ENCODE measurements at regions of chr11 and their contacts with region 1.

Region 1: GRCh38 chr11:62645956-62646824 is at the start of gene GANAB:
- DNase-seq: peak; percentile 98
- H3K4me3 Mint-ChIP-seq: peak within 1 kb of the TSS; percentile 93
- H3K27ac Mint-ChIP-seq: peak within 1 kb of the TSS; percentile 91
- H3K4me1 Mint-ChIP-seq: no peaks in the 10 kb centered on the region
- H3K27me3 Mint-ChIP-seq: no peaks in the 10 kb centered on the region
- CTCF ChIP-seq: no peak
- total RNA-seq, gene GANAB: 356 and 377 TPM in 2 replicates

Region 2: DNA sequence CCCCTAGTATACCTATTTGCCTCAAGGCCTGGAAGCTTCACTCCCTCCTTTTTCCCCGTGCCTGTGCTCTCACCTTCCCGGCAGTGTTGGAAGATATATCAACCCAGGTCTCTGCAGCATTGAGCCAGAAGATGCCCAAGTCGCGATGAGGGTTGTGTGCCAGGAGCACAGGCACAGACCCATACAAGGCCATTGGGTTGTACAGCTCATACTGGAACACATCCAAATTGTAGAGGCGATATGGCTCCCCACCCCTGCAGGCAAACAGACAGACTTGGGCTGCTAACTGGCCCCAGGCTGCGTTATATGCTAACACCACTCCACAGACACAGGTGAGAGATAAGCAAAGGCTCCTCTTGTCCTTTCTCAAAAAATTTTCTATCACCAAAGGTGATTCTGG is 13.7 kb before region 1 on chr11:
- CTCF ChIA-PET with region 1: no interaction called
- intact Hi-C with region 1: loop called (anchors 1 kb)
- DNase-seq: no peak
- H3K4me3 Mint-ChIP-seq: no peak overlapping the region
- H3K27ac Mint-ChIP-seq: no peak overlapping the region
- H3K4me1 Mint-ChIP-seq: no peaks in the 10 kb centered on the region
- H3K27me3 Mint-ChIP-seq: no peaks in the 10 kb centered on the region
- CTCF ChIP-seq: no peak